GM10248 (cell line): ENCODE measurements at regions of chr6 and their contacts with region 1.

Region 1: DNA sequence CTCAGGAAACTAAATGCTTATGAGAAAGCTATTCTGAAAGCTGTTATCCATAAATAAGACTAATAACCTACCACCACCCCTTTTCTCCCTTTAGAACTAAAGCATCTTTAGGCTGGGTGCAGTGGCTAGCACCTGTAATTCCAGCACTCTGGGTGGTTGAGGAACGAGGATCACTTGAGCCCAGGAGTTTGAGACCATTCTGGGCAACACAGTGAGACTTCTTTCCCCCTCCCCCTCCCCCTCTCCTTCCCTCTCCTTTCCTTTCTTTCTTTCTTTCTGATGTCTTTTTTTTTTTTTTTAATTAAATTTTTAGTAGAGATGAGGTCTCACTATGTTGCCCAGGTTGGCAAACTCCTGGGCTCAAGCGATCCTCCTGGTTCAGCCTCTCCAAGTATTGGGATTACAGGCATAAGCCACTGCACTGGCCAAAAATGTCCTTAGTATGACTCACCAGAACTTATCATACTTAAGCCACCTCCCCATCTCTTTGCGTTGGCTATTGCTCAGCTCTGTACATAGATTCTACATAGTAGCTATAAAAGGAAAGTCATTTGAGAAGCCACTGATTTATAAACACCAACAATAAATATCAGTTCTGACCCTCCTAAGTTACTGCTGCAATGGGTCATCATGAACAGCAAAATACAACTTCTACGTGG is 54.8 kb upstream of the SPDEF start:
- DNase-seq: no peak
- CTCF ChIP-seq: no peak

Region 2: DNA sequence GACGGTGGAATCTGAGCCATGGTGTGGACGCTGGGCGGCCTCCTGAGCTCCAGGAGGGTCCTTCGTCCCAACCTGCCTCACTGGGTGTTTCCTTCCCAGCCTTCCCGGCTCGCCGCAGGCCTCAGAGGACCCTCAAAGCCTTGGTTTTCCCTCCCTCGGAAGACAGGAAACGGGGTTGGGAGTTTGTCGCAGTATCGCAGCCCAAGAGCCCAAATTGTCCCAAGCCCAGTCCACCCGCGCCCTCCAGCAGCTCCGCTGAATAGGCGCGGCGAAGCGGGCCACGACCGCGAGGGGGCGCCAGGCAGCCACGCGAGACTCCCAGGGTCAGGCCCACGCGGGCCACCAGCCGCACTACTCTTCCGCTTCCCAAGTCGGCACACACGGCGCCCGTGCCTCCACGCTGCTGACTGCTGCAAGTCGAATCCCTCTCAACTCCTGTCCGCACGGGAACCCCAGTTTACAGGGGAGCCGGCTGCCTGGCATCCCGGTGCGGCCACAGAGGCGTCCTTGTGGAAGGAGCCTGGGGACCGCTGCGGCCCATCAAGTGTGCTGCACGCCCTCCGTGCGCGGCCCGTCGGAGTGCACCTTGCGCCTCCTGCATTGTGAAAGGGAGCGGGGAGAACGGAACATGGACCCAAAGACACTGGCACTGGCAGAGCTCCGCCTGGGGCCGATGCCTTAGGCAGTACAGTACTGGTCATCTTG is 414.7 kb before region 1 on chr6:
- CTCF ChIA-PET with region 1: interaction called, 25 read pairs
- POLR2A ChIA-PET with region 1: no interaction called
- DNase-seq: peak; percentile 93
- CTCF ChIP-seq: peak; percentile 98

Region 3: DNA sequence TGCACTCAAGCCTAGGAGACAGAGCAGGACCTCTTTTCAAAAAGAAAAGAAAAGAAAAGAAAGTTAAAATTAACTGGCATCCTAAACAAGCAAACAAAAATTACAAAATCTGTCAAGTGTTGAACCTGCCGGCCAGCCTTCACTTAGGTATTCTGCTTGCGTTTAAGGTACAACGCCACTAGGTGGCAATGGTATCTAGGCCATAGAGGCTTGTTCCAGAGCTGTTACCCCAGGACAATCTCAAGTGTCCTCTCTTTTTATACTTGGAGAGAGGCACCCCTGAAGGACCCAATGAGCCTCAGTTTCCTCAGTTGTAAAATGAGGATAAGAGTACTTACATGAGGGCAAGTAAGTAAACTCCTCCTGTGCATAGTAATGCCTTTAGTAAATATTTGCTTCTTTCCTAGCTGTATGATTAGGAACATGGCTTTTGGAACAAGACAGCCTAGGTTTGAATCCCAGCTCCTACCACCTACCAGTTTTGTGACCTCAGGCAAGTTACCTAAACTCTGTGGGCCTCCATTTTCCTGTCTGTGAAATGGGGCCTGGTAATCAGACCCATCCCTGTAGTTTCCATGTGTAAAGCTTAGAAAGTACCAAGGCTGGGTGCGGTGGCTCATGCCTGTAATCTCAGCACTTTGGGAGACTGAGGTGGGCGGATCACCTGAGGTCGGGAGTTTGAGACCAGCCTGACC is 150.9 kb before region 1 on chr6:
- CTCF ChIA-PET with region 1: interaction called, 61 read pairs
- POLR2A ChIA-PET with region 1: no interaction called
- DNase-seq: peak; percentile 76
- CTCF ChIP-seq: peak; percentile 75

Region 4: DNA sequence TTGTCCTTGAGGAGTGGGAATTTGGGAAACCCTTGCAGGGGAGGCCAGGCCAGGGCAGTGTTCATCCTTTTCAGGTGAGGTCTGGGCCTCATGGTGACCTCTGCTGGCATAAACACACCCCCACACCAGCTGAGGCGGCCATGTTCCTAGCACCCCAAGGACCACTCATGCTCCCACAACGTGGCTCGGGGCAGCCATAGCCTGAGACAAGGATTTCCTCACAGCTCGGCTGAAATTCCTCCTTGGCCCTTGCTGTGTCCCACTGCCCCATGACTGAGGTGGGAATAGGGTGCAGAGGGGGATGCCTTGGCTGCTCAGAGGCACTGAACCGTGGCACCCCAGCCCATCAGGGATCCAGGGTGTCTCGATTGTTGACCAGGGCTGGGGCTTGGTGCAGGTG is 27.5 kb before region 1 on chr6:
- CTCF ChIA-PET with region 1: interaction called, 28 read pairs
- POLR2A ChIA-PET with region 1: no interaction called
- DNase-seq: no peak
- CTCF ChIP-seq: peak; percentile 18

Region 5: DNA sequence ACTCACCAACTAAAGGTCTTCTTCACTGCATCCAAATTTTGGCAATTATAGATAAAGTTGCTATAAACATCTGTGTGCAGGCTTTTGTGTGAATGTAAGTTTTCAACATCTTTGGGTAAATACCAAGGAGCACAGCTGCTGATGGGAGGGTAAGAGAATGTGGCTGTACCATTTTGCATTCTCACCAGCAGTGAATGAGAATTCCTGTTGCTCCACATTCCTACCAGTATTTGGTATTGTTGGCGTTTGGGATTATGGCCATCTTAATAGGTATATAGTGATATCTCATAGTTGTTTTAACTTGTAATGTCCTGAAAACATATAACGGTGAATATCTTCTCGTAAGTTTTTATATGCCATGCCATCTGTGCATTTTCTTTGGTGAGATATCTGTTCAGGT is 16.3 kb after region 1 on chr6:
- CTCF ChIA-PET with region 1: interaction called, 23 read pairs
- POLR2A ChIA-PET with region 1: interaction called, 3 read pairs
- DNase-seq: no peak
- CTCF ChIP-seq: no peak